Activated CD4-positive, alpha-beta T cell treated with anti-CD3 and anti-CD28 coated beads for 36 hours (primary cell): ENCODE measurements at regions of chr15 and their contacts with region 1.

Region 1: DNA sequence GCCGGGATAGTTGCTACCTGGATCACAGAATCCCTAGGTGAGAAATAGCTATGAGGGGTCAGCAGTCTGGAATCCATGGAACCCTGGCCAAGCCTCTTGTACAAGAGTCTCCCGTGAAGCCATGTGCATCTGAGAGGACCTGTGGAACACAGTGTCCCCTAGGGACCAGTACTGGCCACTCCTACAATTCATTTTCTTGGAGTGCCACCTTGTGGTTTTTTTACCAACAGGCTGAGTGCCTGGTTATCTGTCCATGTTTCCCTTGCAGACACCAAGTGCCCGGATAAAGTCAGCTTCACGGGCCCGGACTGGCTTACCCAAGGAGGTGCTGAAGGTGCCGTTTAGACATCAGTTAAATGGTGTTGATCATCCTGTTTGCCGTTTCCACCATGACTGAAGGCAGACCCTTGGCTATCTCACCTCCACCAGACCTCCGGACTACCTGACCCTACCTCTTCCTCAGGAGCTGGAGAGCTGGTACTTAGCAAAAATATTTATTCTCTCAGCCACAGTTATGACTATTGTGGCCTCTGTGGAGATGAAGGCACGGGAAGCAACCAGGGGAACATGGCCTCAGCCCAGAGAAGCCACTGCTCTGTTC is 93.9 kb downstream of the RBPMS2 start:
- DNase-seq: peak; percentile 16
- ATAC-seq: peak; percentile 60
- H3K4me3 Mint-ChIP-seq: no peak overlapping the region
- H3K27ac Mint-ChIP-seq: no peak overlapping the region
- H3K4me1 Mint-ChIP-seq: no peaks in the 10 kb centered on the region
- H3K27me3 Mint-ChIP-seq: no peaks in the 10 kb centered on the region

Region 2: GRCh38 chr15:64430000-64430735 is 251.4 kb before region 1 on chr15:
- CTCF ChIA-PET with region 1: interaction called, 6 read pairs
- POLR2A ChIA-PET with region 1: no interaction called
- intact Hi-C with region 1: loop called in 1 of 2 experiments (anchors 1 kb)
- DNase-seq: peak; percentile 35
- ATAC-seq: peak; percentile 61
- H3K4me3 Mint-ChIP-seq: no peak overlapping the region
- H3K27ac Mint-ChIP-seq: peak overlapping the region; percentile 92
- H3K4me1 Mint-ChIP-seq: peaks cover 44% of the 10 kb centered on the region
- H3K27me3 Mint-ChIP-seq: no peaks in the 10 kb centered on the region

Region 3: GRCh38 chr15:64693134-64693533 is 11.6 kb after region 1 on chr15:
- CTCF ChIA-PET with region 1: interaction called, 24 read pairs
- POLR2A ChIA-PET with region 1: no interaction called
- intact Hi-C with region 1: no loop called
- DNase-seq: no peak
- ATAC-seq: no peak
- H3K4me3 Mint-ChIP-seq: no peak overlapping the region
- H3K27ac Mint-ChIP-seq: peak overlapping the region; percentile 70
- H3K4me1 Mint-ChIP-seq: peaks cover 34% of the 10 kb centered on the region
- H3K27me3 Mint-ChIP-seq: no peaks in the 10 kb centered on the region

Region 4: GRCh38 chr15:64961013-64961412 is 279.5 kb after region 1 on chr15:
- CTCF ChIA-PET with region 1: no interaction called
- POLR2A ChIA-PET with region 1: no interaction called
- intact Hi-C with region 1: no loop called
- DNase-seq: no peak
- ATAC-seq: no peak
- H3K4me3 Mint-ChIP-seq: no peak overlapping the region
- H3K27ac Mint-ChIP-seq: no peak overlapping the region
- H3K4me1 Mint-ChIP-seq: no peaks in the 10 kb centered on the region
- H3K27me3 Mint-ChIP-seq: no peaks in the 10 kb centered on the region